Right lobe of liver (tissue), 6 donors: ENCODE measurements at regions of chr10 and their contacts with region 1.

Region 1: DNA sequence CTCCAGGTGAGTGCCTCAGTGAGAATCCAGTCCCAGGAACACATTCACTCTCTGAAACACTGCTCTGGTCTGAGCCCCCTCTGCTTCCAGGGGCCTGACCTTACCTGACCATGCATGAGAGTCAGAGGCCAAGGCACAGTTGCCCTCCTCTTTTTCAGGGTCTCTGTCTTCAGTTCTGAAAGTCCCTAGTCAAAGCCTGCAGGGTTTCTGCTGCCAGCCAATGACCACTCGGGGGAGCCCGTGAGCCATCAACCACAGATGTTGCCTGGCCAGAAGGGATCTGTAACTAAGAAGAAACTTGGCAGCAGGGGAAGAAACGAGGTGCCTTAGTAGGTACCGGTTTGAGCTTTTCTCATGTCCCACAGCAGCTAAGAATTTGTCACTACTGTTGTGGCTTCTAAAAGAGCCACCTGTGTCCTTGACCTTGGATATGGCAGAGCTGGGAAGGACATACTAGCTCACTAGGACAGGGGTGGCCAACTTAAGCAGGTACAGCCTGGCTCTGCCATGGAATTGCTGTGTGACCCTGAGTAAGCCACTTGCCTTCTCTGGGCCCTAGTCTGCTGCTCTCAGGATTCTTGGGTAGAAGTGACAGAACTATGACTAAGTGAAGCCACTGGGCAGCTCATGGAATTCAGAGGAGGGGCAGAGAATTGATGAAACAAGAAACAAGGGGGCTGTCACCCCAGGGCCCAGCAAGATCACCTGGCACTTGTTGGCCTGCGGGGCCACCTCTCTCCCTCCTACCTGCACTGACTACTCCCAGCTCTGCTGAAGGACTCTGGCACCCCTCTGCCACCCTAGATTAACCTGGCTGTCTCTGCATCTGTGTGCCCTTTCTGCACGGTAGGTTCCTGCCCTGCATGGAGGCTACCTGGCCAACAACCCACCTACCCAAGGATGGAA is 83.8 kb upstream of the GPR26 start:
- DNase-seq: peak; percentile 75 to 82 (median 78)
- ATAC-seq: peak; percentile 80 to 88 (median 83)
- H3K4me3 ChIP-seq: no peak overlapping the region
- H3K27ac ChIP-seq: no peak overlapping the region
- H3K4me1 ChIP-seq: no peaks in the 10 kb centered on the region
- H3K27me3 ChIP-seq: peaks cover 0 to 15% of the 10 kb centered on the region in 2 donors
- CTCF ChIP-seq: peak; percentile 65 to 90 (median 88)
- POLR2A ChIP-seq: no peak

Region 2: GRCh38 chr10:123967396-123968243 is 385.3 kb after region 1 on chr10:
- intact Hi-C with region 1: loop called (anchors 5 kb)
- DNase-seq: peak; percentile 69 to 74 (median 70)
- ATAC-seq: peak; percentile 75 to 91 (median 84)
- H3K4me3 ChIP-seq: no peak overlapping the region
- H3K27ac ChIP-seq: no peak overlapping the region
- H3K4me1 ChIP-seq: no peaks in the 10 kb centered on the region
- H3K27me3 ChIP-seq: no peaks in the 10 kb centered on the region
- CTCF ChIP-seq: peak; percentile 78 to 94 (median 87)
- POLR2A ChIP-seq: no peak